MCF 10A (cell line): ENCODE measurements at regions of chr6 and their contacts with region 1.

Region 1: GRCh38 chr6:125046107-125046925 is 84.1 kb downstream of the RNF217 start:
- DNase-seq: peak; percentile 89
- H3K4me3 Mint-ChIP-seq: peak overlapping the region; percentile 37
- H3K27ac Mint-ChIP-seq: peak overlapping the region; percentile 78
- H3K4me1 Mint-ChIP-seq: peaks cover 59% of the 10 kb centered on the region
- H3K27me3 Mint-ChIP-seq: no peaks in the 10 kb centered on the region
- CTCF ChIP-seq: no peak

Region 2: DNA sequence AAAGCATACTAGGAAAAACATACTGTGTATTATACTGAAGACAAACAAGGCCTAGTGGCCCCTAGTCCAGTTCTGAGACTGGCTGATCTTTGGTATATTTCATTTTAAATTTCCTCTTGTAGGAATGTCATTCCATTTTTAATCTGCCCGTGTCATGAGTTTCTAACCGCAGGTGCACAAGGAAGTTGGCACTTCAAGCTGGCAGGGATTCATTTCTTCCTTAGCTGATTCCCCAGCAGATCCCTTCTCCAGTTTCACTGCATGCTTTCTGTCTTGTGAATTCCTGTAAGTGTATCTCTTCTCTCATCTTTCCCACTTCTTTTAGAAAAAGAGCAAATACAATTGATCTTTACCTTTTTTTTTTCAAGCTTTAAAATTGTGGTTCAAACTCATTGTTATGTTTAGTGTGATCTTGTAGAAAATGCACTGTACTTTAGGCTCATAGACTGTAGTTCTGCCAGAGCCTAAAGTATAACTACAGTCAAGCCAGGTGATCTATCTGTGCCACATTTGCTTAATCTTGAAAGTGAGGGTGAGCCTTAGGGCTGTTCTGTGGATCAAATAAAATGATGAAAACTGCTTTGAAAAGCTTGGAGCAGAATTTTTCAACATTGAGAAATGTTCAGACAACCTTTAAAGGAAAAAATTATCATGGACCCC is 47.1 kb before region 1 on chr6:
- CTCF ChIA-PET with region 1: no interaction called
- POLR2A ChIA-PET with region 1: interaction called, 19 read pairs
- intact Hi-C with region 1: loop called (anchors 5 kb)
- DNase-seq: peak; percentile 58
- H3K4me3 Mint-ChIP-seq: no peak overlapping the region
- H3K27ac Mint-ChIP-seq: peak overlapping the region; percentile 7
- H3K4me1 Mint-ChIP-seq: peaks cover 41% of the 10 kb centered on the region
- H3K27me3 Mint-ChIP-seq: no peaks in the 10 kb centered on the region
- CTCF ChIP-seq: no peak

Region 3: GRCh38 chr6:125008261-125008703 is 38.0 kb before region 1 on chr6:
- CTCF ChIA-PET with region 1: interaction called, 3 read pairs
- POLR2A ChIA-PET with region 1: interaction called, 19 read pairs
- intact Hi-C with region 1: no loop called
- DNase-seq: no peak
- H3K4me3 Mint-ChIP-seq: no peak overlapping the region
- H3K27ac Mint-ChIP-seq: no peak overlapping the region
- H3K4me1 Mint-ChIP-seq: peaks cover 29% of the 10 kb centered on the region
- H3K27me3 Mint-ChIP-seq: no peaks in the 10 kb centered on the region
- CTCF ChIP-seq: no peak